ENCODE measurements at regions of chr15 and their contacts with region 1.

Region 1: DNA sequence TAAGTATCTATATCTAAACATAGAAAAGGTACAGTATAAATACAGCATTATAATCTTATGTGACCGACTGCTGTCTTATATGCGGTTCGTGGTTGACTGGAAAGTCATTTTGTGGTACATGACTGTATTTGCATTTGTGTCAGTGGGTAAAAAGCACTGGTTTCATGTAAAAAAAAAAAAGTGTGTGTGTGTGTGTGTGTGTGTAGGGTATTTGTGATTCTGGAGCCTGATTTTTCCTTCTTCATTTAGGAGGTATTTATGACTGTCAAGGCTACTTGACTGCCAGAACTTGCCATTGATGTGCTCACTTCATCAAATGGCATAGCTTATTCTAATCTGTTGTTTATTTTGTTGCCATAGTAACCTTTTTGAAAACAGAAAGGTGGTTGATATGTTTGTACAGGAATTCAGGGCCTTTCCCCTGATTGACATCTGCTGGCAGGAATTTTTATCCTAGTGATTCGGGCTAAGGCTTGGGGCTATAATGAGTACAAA is 63.2 kb downstream of the AKAP13 start:
- DNase-seq: peak; percentile 55 to 94
- H3K4me3 ChIP-seq: no peak overlapping the region; the same call in 1 of the 2 replicates
- H3K27ac ChIP-seq: peak overlapping the region; percentile 57
- H3K4me1 ChIP-seq: peaks cover 34% of the 10 kb centered on the region
- H3K27me3 ChIP-seq: no peaks in the 10 kb centered on the region
- CTCF ChIP-seq: no peak; the same call in 1 of the 2 replicates

Region 2: DNA sequence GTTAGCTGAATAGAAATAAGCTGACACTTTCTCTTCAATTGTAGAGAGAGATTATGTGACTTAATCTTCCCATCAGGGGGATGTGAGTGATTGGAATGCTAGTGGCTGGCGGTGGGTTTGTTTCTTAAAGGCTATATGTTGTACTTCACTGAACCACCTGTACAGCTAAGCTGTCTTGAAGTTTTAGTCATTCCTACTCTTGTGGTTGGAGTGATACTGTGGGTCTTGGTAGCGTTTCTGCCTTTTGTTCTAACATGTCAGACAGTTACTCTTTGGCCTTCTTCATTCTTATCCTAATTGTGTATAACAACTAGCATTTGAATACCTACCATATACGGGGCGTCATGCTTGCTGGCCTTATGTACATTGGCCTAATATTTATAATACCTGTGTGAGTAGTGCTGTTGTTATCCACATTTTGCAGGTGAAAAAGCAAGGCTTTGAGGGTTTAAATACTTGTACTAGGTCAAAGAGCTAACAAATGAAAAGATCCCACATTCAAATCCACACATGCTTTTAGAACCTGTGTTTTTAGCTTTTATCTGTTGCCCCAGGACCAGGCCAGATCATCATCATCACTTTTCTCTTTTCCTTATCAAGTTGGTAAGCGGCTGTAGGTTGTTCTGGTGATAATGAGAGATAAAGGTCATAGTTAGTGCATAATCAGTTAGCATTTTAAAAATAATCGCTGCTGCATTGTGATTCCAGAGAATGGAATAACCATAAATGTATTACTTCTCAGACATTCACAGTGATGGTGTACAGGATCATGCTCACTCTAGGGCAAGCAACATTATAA is 13.0 kb before region 1 on chr15:
- CTCF ChIA-PET with region 1: no interaction called
- POLR2A ChIA-PET with region 1: no interaction called
- intact Hi-C with region 1: no loop called
- DNase-seq: no peak
- H3K4me3 ChIP-seq: no peak overlapping the region
- H3K27ac ChIP-seq: no peak overlapping the region
- H3K4me1 ChIP-seq: 0 out of 2 replicates have a peak, but pooled peaks cover 5% of the 10 kb centered on the region
- H3K27me3 ChIP-seq: no peaks in the 10 kb centered on the region
- CTCF ChIP-seq: no peak

Region 3: GRCh38 chr15:85485956-85486567 is 42.4 kb after region 1 on chr15:
- CTCF ChIA-PET with region 1: interaction called, 3 read pairs
- POLR2A ChIA-PET with region 1: no interaction called
- intact Hi-C with region 1: loop called (anchors 5 kb)
- DNase-seq: peak; percentile 55 to 56
- H3K4me3 ChIP-seq: no peak overlapping the region
- H3K27ac ChIP-seq: no peak overlapping the region
- H3K4me1 ChIP-seq: 0 out of 2 replicates have a peak, but pooled peaks cover 11% of the 10 kb centered on the region
- H3K27me3 ChIP-seq: no peaks in the 10 kb centered on the region
- CTCF ChIP-seq: peak; percentile 87

Measured in PC-9 (cell line).